ENCODE measurements at regions of chr14 and their contacts with region 1.

Region 1: DNA sequence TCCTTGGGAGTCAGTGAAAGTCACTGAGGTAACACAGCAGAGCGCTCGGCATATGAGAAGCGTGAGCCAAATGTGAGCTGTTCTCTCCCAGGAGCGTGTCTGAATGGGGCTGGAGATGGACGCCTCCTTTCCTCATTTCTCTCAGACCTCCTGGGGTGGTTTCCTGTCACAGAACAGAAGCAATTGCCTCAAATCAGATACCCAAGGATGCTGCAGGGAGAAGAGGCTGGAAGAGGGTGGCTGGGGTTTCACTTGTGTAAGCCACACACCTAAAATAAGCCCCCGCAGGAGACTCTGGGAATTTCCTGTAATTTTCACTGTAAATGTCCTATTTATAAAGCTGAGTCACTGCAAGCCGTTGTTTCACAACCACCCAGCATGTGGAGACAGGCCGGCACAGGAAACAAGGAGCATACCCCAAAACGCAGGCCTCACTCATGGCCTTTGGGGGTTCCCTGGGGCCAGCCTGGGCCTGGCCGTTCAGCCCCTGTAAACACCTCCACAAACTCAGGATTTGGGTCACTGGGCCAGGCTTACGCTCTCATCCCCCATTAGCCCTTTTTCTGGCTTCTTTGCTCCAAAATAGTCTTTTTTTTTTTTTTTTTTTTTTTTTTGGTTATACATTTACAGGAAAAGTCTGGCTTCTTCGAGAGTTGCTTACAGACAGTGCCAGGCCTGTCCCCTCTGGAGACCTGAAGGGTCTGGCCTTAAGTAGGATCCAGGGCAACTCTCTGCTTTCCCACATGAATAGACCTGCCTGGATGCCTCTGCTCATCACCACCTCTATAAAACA is 55.3 kb downstream of the VCPKMT start:
- DNase-seq: peak; percentile 65
- ATAC-seq: peak; percentile 11
- H3K4me3 Mint-ChIP-seq: peak overlapping the region; percentile 99
- H3K27ac Mint-ChIP-seq: peak overlapping the region; percentile 100
- H3K4me1 Mint-ChIP-seq: peaks cover 76% of the 10 kb centered on the region
- H3K27me3 Mint-ChIP-seq: no peaks in the 10 kb centered on the region

Region 2: DNA sequence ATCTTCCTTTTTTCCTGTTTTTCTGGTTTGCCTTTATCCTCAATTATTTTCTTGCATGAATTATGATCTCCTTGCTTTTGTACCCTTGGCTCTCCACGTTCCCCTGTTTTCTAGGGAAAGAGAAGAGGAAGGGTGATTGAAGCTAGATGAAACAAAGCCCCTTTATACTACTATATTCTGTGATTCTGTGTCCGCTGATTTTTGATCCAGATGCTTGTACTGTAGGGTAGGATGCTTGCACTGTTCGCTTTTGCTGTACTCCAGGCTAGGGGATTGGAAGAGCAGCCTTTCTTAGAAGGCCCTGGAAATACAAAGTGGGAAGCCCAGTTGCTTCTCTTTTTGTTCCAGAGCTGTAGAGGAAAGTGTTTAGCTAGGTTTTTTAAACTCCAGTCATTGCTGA is 328.2 kb before region 1 on chr14:
- POLR2A ChIA-PET with region 1: no interaction called
- DNase-seq: no peak
- ATAC-seq: no peak
- H3K4me3 Mint-ChIP-seq: no peak overlapping the region
- H3K27ac Mint-ChIP-seq: no peak overlapping the region
- H3K4me1 Mint-ChIP-seq: no peaks in the 10 kb centered on the region
- H3K27me3 Mint-ChIP-seq: no peaks in the 10 kb centered on the region

Region 3: GRCh38 chr14:49879683-49880204 is 181.3 kb before region 1 on chr14:
- POLR2A ChIA-PET with region 1: interaction called, 14 read pairs
- DNase-seq: peak; percentile 44
- ATAC-seq: peak; percentile 96
- H3K4me3 Mint-ChIP-seq: no peak overlapping the region
- H3K27ac Mint-ChIP-seq: peak overlapping the region; percentile 46
- H3K4me1 Mint-ChIP-seq: peaks cover 15% of the 10 kb centered on the region
- H3K27me3 Mint-ChIP-seq: no peaks in the 10 kb centered on the region

Region 4: DNA sequence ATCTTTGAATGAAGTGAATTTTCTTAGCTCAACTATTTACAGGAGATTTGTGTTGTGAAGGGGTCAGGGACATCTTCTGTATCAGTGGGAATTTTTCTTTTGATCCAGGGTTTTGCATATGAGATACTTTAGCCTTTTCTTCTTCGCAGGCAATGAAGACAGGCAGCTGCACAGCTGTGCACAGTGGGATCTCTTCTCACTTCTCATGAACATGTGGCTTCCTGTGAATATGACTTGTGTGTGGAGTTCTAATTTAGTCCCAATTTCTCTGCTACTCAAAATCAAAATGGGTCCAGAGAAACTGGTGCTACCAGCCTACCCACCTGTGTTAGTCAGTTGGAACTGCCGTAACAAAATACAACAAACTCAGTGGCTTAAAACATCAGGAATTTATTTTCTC is 130.3 kb before region 1 on chr14:
- POLR2A ChIA-PET with region 1: no interaction called
- DNase-seq: no peak
- ATAC-seq: no peak
- H3K4me3 Mint-ChIP-seq: no peak overlapping the region
- H3K27ac Mint-ChIP-seq: no peak overlapping the region
- H3K4me1 Mint-ChIP-seq: peaks cover 6% of the 10 kb centered on the region
- H3K27me3 Mint-ChIP-seq: no peaks in the 10 kb centered on the region

Region 5: DNA sequence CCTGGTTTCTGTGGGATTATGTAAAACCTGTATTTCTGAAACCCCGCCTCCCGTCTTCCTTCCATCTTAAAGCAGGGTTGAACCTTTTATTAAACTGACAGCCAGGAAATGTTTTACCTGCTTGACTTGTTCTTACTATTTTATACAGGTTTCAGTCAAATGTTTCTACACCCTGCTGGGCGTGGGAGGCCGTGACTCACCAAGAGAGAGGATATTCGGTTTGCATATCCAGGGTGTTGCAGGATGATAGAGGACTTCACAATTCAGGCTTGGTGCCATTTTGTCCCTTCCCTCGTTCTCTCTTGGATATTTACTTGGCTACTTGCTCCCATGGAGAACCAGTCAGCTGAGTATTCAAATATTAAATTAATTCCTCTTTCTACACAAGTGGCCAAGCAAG is 98.4 kb before region 1 on chr14:
- POLR2A ChIA-PET with region 1: no interaction called
- DNase-seq: no peak
- ATAC-seq: no peak
- H3K4me3 Mint-ChIP-seq: no peak overlapping the region
- H3K27ac Mint-ChIP-seq: no peak overlapping the region
- H3K4me1 Mint-ChIP-seq: peaks cover 26% of the 10 kb centered on the region
- H3K27me3 Mint-ChIP-seq: no peaks in the 10 kb centered on the region

Region 6: GRCh38 chr14:50038398-50039119 is 22.5 kb before region 1 on chr14:
- POLR2A ChIA-PET with region 1: interaction called, 73 read pairs
- DNase-seq: no peak
- ATAC-seq: peak; percentile 40
- H3K4me3 Mint-ChIP-seq: peak overlapping the region; percentile 54
- H3K27ac Mint-ChIP-seq: peak overlapping the region; percentile 98
- H3K4me1 Mint-ChIP-seq: peaks cover 53% of the 10 kb centered on the region
- H3K27me3 Mint-ChIP-seq: no peaks in the 10 kb centered on the region

Region 7: GRCh38 chr14:50085570-50086320 is 24.7 kb after region 1 on chr14:
- POLR2A ChIA-PET with region 1: interaction called, 178 read pairs
- DNase-seq: no peak
- ATAC-seq: no peak
- H3K4me3 Mint-ChIP-seq: peak overlapping the region; percentile 69
- H3K27ac Mint-ChIP-seq: peak overlapping the region; percentile 94
- H3K4me1 Mint-ChIP-seq: peaks cover 76% of the 10 kb centered on the region
- H3K27me3 Mint-ChIP-seq: no peaks in the 10 kb centered on the region

Region 8: GRCh38 chr14:50099335-50099734 is 38.3 kb after region 1 on chr14:
- POLR2A ChIA-PET with region 1: interaction called, 46 read pairs
- DNase-seq: no peak
- ATAC-seq: peak; percentile 46
- H3K4me3 Mint-ChIP-seq: peak overlapping the region; percentile 33
- H3K27ac Mint-ChIP-seq: peak overlapping the region; percentile 70
- H3K4me1 Mint-ChIP-seq: peaks cover 56% of the 10 kb centered on the region
- H3K27me3 Mint-ChIP-seq: no peaks in the 10 kb centered on the region

Region 9: GRCh38 chr14:50123062-50123461 is 62.0 kb after region 1 on chr14:
- POLR2A ChIA-PET with region 1: no interaction called
- DNase-seq: no peak
- ATAC-seq: no peak
- H3K4me3 Mint-ChIP-seq: no peak overlapping the region
- H3K27ac Mint-ChIP-seq: no peak overlapping the region
- H3K4me1 Mint-ChIP-seq: peaks cover 3% of the 10 kb centered on the region
- H3K27me3 Mint-ChIP-seq: no peaks in the 10 kb centered on the region